Dendritic cell treated with granulocyte-macrophage colony-stimulating factor and Interleukin-4, amounts not matched to agents 40 ng/mL and 50 ng/mL, for 4 days (primary cell): ENCODE measurements at regions of chr4 and their contacts with region 1.

Region 1: GRCh38 chr4:139177868-139178611 is 1.0 kb upstream of the ELF2 start:
- H3K4me3 Mint-ChIP-seq: peak overlapping the region; percentile 95
- H3K27ac Mint-ChIP-seq: peak overlapping the region; percentile 98
- H3K4me1 Mint-ChIP-seq: peaks cover 13% of the 10 kb centered on the region
- H3K27me3 Mint-ChIP-seq: no peaks in the 10 kb centered on the region

Region 2: GRCh38 chr4:139030614-139031235 is 147.3 kb before region 1 on chr4:
- intact Hi-C with region 1: loop called (anchors 10 kb)
- H3K4me3 Mint-ChIP-seq: no peak overlapping the region
- H3K27ac Mint-ChIP-seq: no peak overlapping the region
- H3K4me1 Mint-ChIP-seq: peaks cover 52% of the 10 kb centered on the region
- H3K27me3 Mint-ChIP-seq: no peaks in the 10 kb centered on the region

Region 3: GRCh38 chr4:139083956-139084803 is 93.9 kb before region 1 on chr4:
- intact Hi-C with region 1: loop called (anchors 5 kb)
- H3K4me3 Mint-ChIP-seq: peak overlapping the region; percentile 100
- H3K27ac Mint-ChIP-seq: peak overlapping the region; percentile 100
- H3K4me1 Mint-ChIP-seq: peaks cover 16% of the 10 kb centered on the region
- H3K27me3 Mint-ChIP-seq: no peaks in the 10 kb centered on the region

Region 4: DNA sequence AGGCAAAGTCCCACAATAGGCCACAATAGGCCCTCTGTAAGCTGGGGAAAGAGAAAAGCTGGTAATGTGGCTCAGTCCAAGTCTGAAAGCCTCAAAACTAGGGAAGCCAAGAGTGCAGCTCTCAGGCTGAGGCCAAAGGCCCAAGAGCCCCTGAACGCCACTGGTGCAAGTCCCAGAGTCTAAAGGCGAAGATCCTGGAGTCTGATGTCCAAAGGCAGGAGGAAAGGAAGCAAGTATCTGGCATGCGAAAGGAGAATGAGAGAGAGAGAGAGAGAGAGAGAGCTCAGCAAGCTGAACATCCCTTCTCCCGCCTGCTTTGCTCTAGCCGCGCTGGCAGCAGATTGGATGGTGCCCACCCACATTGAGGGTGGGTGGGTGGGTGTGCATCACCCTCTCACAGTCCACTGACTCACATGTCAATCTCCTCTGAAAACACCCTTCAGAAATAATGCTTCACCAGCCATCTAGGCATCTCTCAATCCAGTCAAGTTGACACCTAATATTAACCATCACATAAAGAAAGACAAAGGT is 29.9 kb after region 1 on chr4:
- intact Hi-C with region 1: loop called (anchors 1 kb)
- H3K4me3 Mint-ChIP-seq: no peak overlapping the region
- H3K27ac Mint-ChIP-seq: peak overlapping the region; percentile 72
- H3K4me1 Mint-ChIP-seq: peaks cover 25% of the 10 kb centered on the region
- H3K27me3 Mint-ChIP-seq: no peaks in the 10 kb centered on the region

Region 5: GRCh38 chr4:139301113-139301820 is 123.2 kb after region 1 on chr4 and contains the start of gene NAA15:
- intact Hi-C with region 1: loop called (anchors 2 kb)
- H3K4me3 Mint-ChIP-seq: peak within 1 kb of the TSS; percentile 89
- H3K27ac Mint-ChIP-seq: peak within 1 kb of the TSS; percentile 92
- H3K4me1 Mint-ChIP-seq: peaks cover 32% of the 10 kb centered on the region
- H3K27me3 Mint-ChIP-seq: no peaks in the 10 kb centered on the region

Region 6: GRCh38 chr4:140609548-140610425 is 1431.7 kb after region 1 on chr4:
- intact Hi-C with region 1: no loop called
- H3K4me3 Mint-ChIP-seq: no peak overlapping the region
- H3K27ac Mint-ChIP-seq: no peak overlapping the region
- H3K4me1 Mint-ChIP-seq: peaks cover 6% of the 10 kb centered on the region
- H3K27me3 Mint-ChIP-seq: peaks cover 4% of the 10 kb centered on the region